Caco-2 (cell line): ENCODE measurements at regions of chr9 and their contacts with region 1.

Region 1: GRCh38 chr9:30301271-30301963 is 2083.0 kb upstream of the ACO1 start:
- DNase-seq: no peak
- H3K4me3 ChIP-seq: no peak overlapping the region
- H3K4me3 Mint-ChIP-seq: no peak overlapping the region
- H3K27ac Mint-ChIP-seq: no peak overlapping the region
- H3K4me1 ChIP-seq: peaks cover 5% of the 10 kb centered on the region; the same call in 1 of the 2 replicates
- H3K4me1 Mint-ChIP-seq: peaks cover 8% of the 10 kb centered on the region
- H3K27me3 ChIP-seq: no peaks in the 10 kb centered on the region
- H3K27me3 Mint-ChIP-seq: no peaks in the 10 kb centered on the region
- CTCF ChIP-seq: no peak

Region 2: GRCh38 chr9:30039712-30040111 is 261.7 kb before region 1 on chr9:
- CTCF ChIA-PET with region 1: no interaction called
- POLR2A ChIA-PET with region 1: no interaction called
- intact Hi-C with region 1: no loop called
- DNase-seq: no peak
- H3K4me3 ChIP-seq: no peak overlapping the region
- H3K4me3 Mint-ChIP-seq: no peak overlapping the region
- H3K27ac Mint-ChIP-seq: no peak overlapping the region
- H3K4me1 ChIP-seq: no peaks in the 10 kb centered on the region
- H3K4me1 Mint-ChIP-seq: no peaks in the 10 kb centered on the region
- H3K27me3 ChIP-seq: no peaks in the 10 kb centered on the region
- H3K27me3 Mint-ChIP-seq: no peaks in the 10 kb centered on the region
- CTCF ChIP-seq: peak in 1 of 2 experiments; percentile 19

Region 3: GRCh38 chr9:30160570-30160969 is 140.8 kb before region 1 on chr9:
- CTCF ChIA-PET with region 1: no interaction called
- POLR2A ChIA-PET with region 1: no interaction called
- intact Hi-C with region 1: no loop called
- DNase-seq: no peak
- H3K4me3 ChIP-seq: no peak overlapping the region
- H3K4me3 Mint-ChIP-seq: no peak overlapping the region
- H3K27ac Mint-ChIP-seq: no peak overlapping the region
- H3K4me1 ChIP-seq: no peaks in the 10 kb centered on the region
- H3K4me1 Mint-ChIP-seq: no peaks in the 10 kb centered on the region
- H3K27me3 ChIP-seq: no peaks in the 10 kb centered on the region; the same call in 1 of the 2 replicates
- H3K27me3 Mint-ChIP-seq: peaks cover 6% of the 10 kb centered on the region
- CTCF ChIP-seq: no peak

Region 4: GRCh38 chr9:30362373-30362772 is 61.0 kb after region 1 on chr9:
- CTCF ChIA-PET with region 1: no interaction called
- POLR2A ChIA-PET with region 1: no interaction called
- intact Hi-C with region 1: loop called (anchors 10 kb)
- DNase-seq: no peak
- H3K4me3 ChIP-seq: no peak overlapping the region
- H3K4me3 Mint-ChIP-seq: no peak overlapping the region
- H3K27ac Mint-ChIP-seq: no peak overlapping the region
- H3K4me1 ChIP-seq: no peaks in the 10 kb centered on the region
- H3K4me1 Mint-ChIP-seq: no peaks in the 10 kb centered on the region
- H3K27me3 ChIP-seq: no peaks in the 10 kb centered on the region
- H3K27me3 Mint-ChIP-seq: no peaks in the 10 kb centered on the region
- CTCF ChIP-seq: no peak